ENCODE measurements at regions of chr5 and their contacts with region 1.

Region 1: GRCh38 chr5:154857530-154858296 is 714 bp upstream of the CNOT8 start:
- DNase-seq: peak; percentile 76
- H3K4me3 ChIP-seq: peak overlapping the region; percentile 80
- H3K27me3 ChIP-seq: no peaks in the 10 kb centered on the region
- CTCF ChIP-seq: 0 out of 2 replicates have a peak, but pooled peaks have one; percentile 14

Region 2: GRCh38 chr5:154449786-154450185 is 407.9 kb before region 1 on chr5:
- CTCF ChIA-PET with region 1: no interaction called
- POLR2A ChIA-PET with region 1: interaction called, 12 read pairs
- DNase-seq: no peak
- H3K4me3 ChIP-seq: no peak overlapping the region
- H3K27me3 ChIP-seq: no peaks in the 10 kb centered on the region
- CTCF ChIP-seq: no peak

Region 3: GRCh38 chr5:154754460-154755360 is 103.0 kb before region 1 on chr5:
- CTCF ChIA-PET with region 1: no interaction called
- POLR2A ChIA-PET with region 1: no interaction called
- DNase-seq: peak; percentile 91
- H3K4me3 ChIP-seq: peak overlapping the region; percentile 94
- H3K27me3 ChIP-seq: no peaks in the 10 kb centered on the region
- CTCF ChIP-seq: peak; percentile 52

Measured in BJ (cell line).